A549 (cell line): ENCODE measurements at regions of chr3 and their contacts with region 1.

Region 1: GRCh38 chr3:160296591-160296990 is 71.4 kb downstream of the C3orf80 start:
- DNase-seq: no peak
- ATAC-seq: no peak
- H3K4me3 ChIP-seq: no peak overlapping the region
- H3K27ac ChIP-seq: no peak overlapping the region
- H3K4me1 ChIP-seq: no peaks in the 10 kb centered on the region
- CTCF ChIP-seq: no peak
- EP300 ChIP-seq: no peak
- POLR2A ChIP-seq: no peak
- RAD21 ChIP-seq: no peak

Region 2: DNA sequence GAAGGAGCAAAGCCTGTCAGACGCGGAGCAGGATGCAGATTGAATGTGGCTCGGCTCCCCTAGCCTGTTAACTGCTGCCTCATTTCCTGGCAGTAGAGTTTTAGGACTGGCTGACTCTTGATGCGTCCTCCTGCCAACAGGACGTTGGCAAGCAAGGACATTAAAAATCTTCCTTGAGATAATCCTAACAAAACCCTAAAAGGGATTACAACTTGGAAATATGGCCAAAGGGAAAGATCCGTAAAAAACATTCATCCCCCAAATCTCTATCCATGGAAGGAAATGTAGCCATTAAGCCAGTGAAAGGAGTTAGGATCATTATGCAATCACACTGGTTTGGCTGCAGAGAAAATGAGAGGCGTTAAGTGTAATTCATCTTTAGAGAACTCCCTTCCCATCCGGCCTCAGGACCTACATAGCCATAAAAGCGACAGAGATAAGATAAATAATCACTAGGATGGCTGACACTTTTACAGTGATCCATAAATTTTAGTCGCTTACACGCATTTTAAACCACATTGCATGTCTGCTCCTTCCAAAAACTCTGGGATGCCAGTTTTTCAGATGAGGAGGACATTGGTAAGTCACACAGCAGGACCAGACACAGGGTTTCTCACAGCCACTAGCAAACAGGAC is 115.9 kb before region 1 on chr3:
- CTCF ChIA-PET with region 1: no interaction called
- POLR2A ChIA-PET with region 1: interaction called, 10 read pairs
- DNase-seq: no peak
- ATAC-seq: no peak
- H3K4me3 ChIP-seq: no peak overlapping the region
- H3K27ac ChIP-seq: no peak overlapping the region
- H3K4me1 ChIP-seq: 0 out of 3 replicates have a peak, but pooled peaks cover 6% of the 10 kb centered on the region
- CTCF ChIP-seq: no peak
- EP300 ChIP-seq: no peak
- POLR2A ChIP-seq: no peak
- RAD21 ChIP-seq: no peak

Region 3: GRCh38 chr3:160232014-160232413 is 64.6 kb before region 1 on chr3:
- CTCF ChIA-PET with region 1: no interaction called
- POLR2A ChIA-PET with region 1: no interaction called
- DNase-seq: no peak
- ATAC-seq: no peak
- H3K4me3 ChIP-seq: no peak overlapping the region
- H3K27ac ChIP-seq: no peak overlapping the region
- H3K4me1 ChIP-seq: no peaks in the 10 kb centered on the region
- CTCF ChIP-seq: no peak
- EP300 ChIP-seq: no peak
- POLR2A ChIP-seq: no peak
- RAD21 ChIP-seq: no peak

Region 4: GRCh38 chr3:160319322-160319721 is 22.7 kb after region 1 on chr3:
- CTCF ChIA-PET with region 1: no interaction called
- POLR2A ChIA-PET with region 1: no interaction called
- DNase-seq: no peak
- ATAC-seq: no peak
- H3K4me3 ChIP-seq: no peak overlapping the region
- H3K27ac ChIP-seq: no peak overlapping the region
- H3K4me1 ChIP-seq: peaks cover 3% of the 10 kb centered on the region; the same call in 1 of the 3 replicates
- CTCF ChIP-seq: no peak
- EP300 ChIP-seq: no peak
- POLR2A ChIP-seq: no peak
- RAD21 ChIP-seq: no peak

Region 5: GRCh38 chr3:160765211-160765610 is 468.6 kb after region 1 on chr3:
- CTCF ChIA-PET with region 1: no interaction called
- POLR2A ChIA-PET with region 1: no interaction called
- DNase-seq: no peak
- ATAC-seq: no peak
- H3K4me3 ChIP-seq: no peak overlapping the region
- H3K27ac ChIP-seq: no peak overlapping the region
- H3K4me1 ChIP-seq: no peaks in the 10 kb centered on the region
- CTCF ChIP-seq: no peak
- EP300 ChIP-seq: no peak
- POLR2A ChIP-seq: no peak
- RAD21 ChIP-seq: no peak

Region 6: DNA sequence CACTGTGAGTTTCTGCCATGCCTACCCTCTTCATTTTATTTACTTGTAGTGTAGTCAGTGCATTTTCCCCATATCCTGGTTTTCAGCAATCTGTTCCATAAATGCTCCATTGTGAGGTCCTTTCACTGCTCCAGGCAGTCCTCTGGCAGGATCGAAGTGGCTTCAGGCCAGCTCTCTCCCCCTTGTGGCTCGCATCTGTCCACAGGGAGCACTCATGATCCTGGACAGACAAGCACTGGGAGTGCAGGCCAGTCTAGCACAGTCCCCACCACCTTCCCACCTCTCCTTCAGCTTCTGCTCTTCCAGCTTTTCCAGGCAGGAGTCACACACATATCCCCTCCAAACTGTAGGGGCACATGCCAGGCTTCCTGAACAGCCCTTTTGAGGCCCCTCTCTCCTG is 633.0 kb after region 1 on chr3:
- CTCF ChIA-PET with region 1: no interaction called
- POLR2A ChIA-PET with region 1: no interaction called
- DNase-seq: peak in 1 of 2 experiments; percentile 7
- ATAC-seq: peak; percentile 63 to 77; a peak in 5 of 6 replicates
- H3K4me3 ChIP-seq: no peak overlapping the region
- H3K27ac ChIP-seq: no peak overlapping the region
- H3K4me1 ChIP-seq: no peaks in the 10 kb centered on the region
- CTCF ChIP-seq: no peak
- EP300 ChIP-seq: no peak
- POLR2A ChIP-seq: no peak
- RAD21 ChIP-seq: no peak